ENCODE measurements at regions of chr13 and their contacts with region 1.

Region 1: GRCh38 chr13:49247643-49248621 is at the start of gene CDADC1:
- DNase-seq: peak; percentile 93 to 95
- ATAC-seq: peak; percentile 97 to 98
- H3K4me3 ChIP-seq: peak within 1 kb of the TSS; percentile 86 to 93 (median 88)
- H3K27ac ChIP-seq: peak within 1 kb of the TSS; percentile 82 to 91 (median 86)
- H3K4me1 ChIP-seq: peaks cover 13 to 20% of the 10 kb centered on the region in 2 donors
- H3K27me3 ChIP-seq: no peaks in the 10 kb centered on the region
- CTCF ChIP-seq: peak in 1 of 5 experiments; percentile 24
- POLR2A ChIP-seq: peak; percentile 72 to 80
- total RNA-seq, gene CDADC1: 1.00 to 8.6 (median 3.9) TPM

Region 2: GRCh38 chr13:48975856-48976575 is 271.9 kb before region 1 on chr13 and contains the start of gene FNDC3A:
- in situ Hi-C with region 1: no loop called
- intact Hi-C with region 1: loop called (anchors 5 kb)
- DNase-seq: peak; percentile 63 to 70
- ATAC-seq: peak; percentile 83 to 86
- H3K4me3 ChIP-seq: peak within 1 kb of the TSS; percentile 88 to 96 (median 92)
- H3K27ac ChIP-seq: peak within 1 kb of the TSS; percentile 98 to 99 (median 98)
- H3K4me1 ChIP-seq: peaks cover 18 to 28% of the 10 kb centered on the region in 2 donors
- H3K27me3 ChIP-seq: no peaks in the 10 kb centered on the region
- CTCF ChIP-seq: peak in 1 of 5 experiments; percentile 33
- POLR2A ChIP-seq: peak; percentile 31 to 60
- total RNA-seq, gene FNDC3A: 9.6 to 18.3 (median 10.4) TPM

Region 3: DNA sequence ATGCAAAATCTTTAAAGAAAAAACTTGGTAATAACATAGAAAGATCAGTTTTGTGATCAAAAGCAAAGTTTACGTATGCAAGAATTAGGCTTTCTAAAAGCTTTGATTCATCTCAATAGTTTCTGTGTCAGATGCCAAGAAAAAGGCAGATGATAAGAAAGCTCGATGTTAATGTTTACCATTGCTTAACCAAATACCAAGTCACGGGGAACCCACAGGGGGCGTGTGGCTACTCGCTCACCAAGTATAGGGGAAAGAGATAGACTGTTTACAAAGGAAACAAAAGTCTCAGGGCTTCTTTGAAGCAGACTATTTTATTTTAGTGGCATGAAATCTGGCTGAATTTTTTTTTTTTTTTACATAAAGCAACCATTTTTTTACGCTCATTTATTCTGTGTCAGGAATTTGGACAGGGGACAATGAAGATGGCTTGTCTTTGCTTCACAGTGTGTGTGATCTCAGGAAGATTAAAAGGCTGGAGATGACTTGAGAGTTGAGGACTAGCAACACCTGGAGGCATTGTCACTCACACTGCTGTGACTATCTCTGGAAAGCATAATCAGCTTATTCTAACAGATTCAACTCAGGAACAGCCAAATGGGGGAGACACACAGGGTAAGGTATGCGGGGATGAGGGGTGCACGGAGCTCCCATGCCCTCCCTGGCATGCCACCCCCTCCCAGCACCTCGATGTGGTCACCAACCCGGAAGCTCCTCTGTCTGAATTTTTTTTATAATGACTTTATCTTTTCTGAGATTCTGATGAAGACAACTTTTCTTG is 312.5 kb after region 1 on chr13:
- in situ Hi-C with region 1: no loop called
- intact Hi-C with region 1: no loop called
- DNase-seq: no peak
- ATAC-seq: no peak
- H3K4me3 ChIP-seq: no peak overlapping the region
- H3K27ac ChIP-seq: no peak overlapping the region
- H3K4me1 ChIP-seq: no peaks in the 10 kb centered on the region
- H3K27me3 ChIP-seq: no peaks in the 10 kb centered on the region
- CTCF ChIP-seq: no peak
- POLR2A ChIP-seq: no peak

Measured in gastrocnemius medialis (tissue), 4 donors.